Naive thymus-derived CD8-positive, alpha-beta T cell (primary cell): ENCODE measurements at regions of chr4 and their contacts with region 1.

Region 1: DNA sequence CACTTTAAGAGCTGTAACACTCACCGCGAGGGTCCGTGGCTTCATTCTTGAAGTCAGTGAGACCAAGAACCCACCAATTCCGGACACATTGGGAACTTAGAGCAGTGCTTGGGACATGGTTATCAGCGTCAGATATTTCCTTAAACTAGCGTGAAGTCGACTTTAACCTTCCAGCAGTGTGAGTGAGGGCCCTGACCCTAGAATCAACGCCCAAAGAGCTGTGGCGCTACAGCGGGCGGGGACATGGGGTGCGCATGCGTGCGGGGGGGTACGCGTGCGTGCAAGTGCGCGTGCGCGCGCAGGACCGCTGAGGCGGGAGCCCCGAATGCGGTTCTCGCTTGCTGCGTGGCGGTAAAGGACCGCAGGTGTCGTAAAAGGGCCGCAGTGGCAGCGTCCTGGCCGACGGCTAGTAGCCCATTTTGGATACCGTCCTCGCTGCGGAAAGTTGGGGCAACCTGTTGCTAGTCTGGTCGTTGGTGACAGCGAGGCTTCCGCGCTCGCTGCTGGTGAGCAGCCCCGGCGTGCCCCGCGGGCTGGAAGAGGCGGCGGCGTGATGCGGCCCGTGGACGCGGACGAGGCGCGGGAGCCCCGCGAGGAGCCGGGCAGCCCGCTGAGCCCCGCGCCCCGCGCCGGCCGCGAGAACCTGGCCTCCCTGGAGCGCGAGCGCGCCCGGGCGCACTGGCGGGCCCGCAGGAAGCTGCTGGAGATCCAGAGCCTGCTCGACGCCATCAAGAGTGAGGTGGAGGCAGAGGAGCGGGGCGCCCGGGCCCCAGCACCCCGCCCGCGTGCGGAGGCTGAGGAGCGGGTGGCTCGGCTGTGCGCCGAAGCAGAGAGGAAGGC is 19.8 kb upstream of the S100P start:
- DNase-seq: peak; percentile 92 to 97 (median 94)
- ATAC-seq: peak; percentile 83 to 86
- H3K4me3 Mint-ChIP-seq: peak overlapping the region; percentile 78 to 100 (median 96)
- H3K27ac Mint-ChIP-seq: peak overlapping the region; percentile 96 to 99 (median 99)
- H3K4me1 Mint-ChIP-seq: peaks cover 37 to 58% (median 53%) of the 10 kb centered on the region in 4 donors
- H3K27me3 Mint-ChIP-seq: peaks cover 0 to 6% (median 0%) of the 10 kb centered on the region in 5 donors

Region 2: GRCh38 chr4:6327041-6327917 is 346.6 kb before region 1 on chr4:
- POLR2A ChIA-PET with region 1: no interaction called
- DNase-seq: peak; percentile 51 to 86 (median 73)
- ATAC-seq: peak; percentile 74 to 93
- H3K4me3 Mint-ChIP-seq: no peak overlapping the region
- H3K27ac Mint-ChIP-seq: peak overlapping the region in 2 of 10 donors; percentile 57 to 73
- H3K4me1 Mint-ChIP-seq: peaks cover 0 to 6% (median 2%) of the 10 kb centered on the region in 4 donors
- H3K27me3 Mint-ChIP-seq: peaks cover 8 to 60% (median 17%) of the 10 kb centered on the region in 5 donors

Region 3: GRCh38 chr4:6620891-6621555 is 52.9 kb before region 1 on chr4:
- POLR2A ChIA-PET with region 1: no interaction called
- DNase-seq: no peak
- ATAC-seq: no peak
- H3K4me3 Mint-ChIP-seq: no peak overlapping the region
- H3K27ac Mint-ChIP-seq: peak overlapping the region in 6 of 10 donors; percentile 16 to 70 (median 46)
- H3K4me1 Mint-ChIP-seq: peaks cover 0 to 4% (median 1%) of the 10 kb centered on the region in 4 donors
- H3K27me3 Mint-ChIP-seq: no peaks in the 10 kb centered on the region

Region 4: DNA sequence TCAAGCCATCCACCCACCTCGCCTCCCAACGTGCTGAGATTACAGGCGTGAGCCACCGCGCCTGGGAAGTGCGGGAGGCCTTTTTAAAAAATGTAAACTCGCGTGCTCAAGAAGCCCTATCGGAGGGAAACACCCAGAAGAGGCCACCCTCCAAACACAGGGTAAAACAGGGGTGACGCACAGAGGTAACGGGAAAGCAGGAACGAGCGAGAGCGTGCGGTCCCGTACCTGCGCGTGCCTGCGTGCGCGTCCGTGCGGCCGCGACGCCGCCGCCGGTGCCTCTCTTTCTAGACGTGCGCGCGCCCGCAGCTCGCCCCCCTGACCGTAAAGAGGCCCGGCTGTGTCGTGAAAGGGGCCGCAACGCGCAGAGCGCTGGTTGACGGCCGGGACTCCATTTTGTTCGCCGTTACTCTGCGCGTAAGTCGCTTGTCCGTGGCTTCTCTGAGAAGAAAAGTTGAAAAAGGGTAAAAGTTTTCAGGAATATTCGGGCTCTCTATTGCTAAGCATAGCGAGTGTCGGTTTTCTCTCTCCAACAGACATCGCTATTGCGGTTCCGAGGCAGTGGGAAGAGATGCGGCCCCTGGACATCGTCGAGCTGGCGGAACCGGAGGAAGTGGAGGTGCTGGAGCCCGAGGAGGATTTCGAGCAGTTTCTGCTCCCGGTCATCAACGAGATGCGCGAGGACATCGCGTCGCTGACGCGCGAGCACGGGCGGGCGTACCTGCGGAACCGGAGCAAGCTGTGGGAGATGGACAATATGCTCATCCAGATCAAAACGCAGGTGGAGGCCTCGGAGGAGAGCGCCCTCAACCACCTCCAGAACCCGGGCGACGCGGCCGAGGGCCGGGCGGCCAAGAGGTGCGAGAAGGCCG is 33.4 kb before region 1 on chr4 and contains the start of gene MRFAP1:
- POLR2A ChIA-PET with region 1: interaction called, 165 read pairs
- DNase-seq: peak; percentile 91 to 97 (median 94)
- ATAC-seq: peak; percentile 84 to 89
- H3K4me3 Mint-ChIP-seq: peak within 1 kb of the TSS; percentile 97 to 100 (median 99)
- H3K27ac Mint-ChIP-seq: peak within 1 kb of the TSS; percentile 98 to 100 (median 99)
- H3K4me1 Mint-ChIP-seq: peaks cover 25 to 45% (median 41%) of the 10 kb centered on the region in 4 donors
- H3K27me3 Mint-ChIP-seq: no peaks in the 10 kb centered on the region
- polyA plus RNA-seq, gene MRFAP1: 141 to 186 (median 155) TPM

Region 5: GRCh38 chr4:6663596-6664393 is 10.1 kb before region 1 on chr4:
- POLR2A ChIA-PET with region 1: interaction called, 38 read pairs
- DNase-seq: no peak
- ATAC-seq: peak; percentile 36 to 43
- H3K4me3 Mint-ChIP-seq: peak overlapping the region in 8 of 10 donors; percentile 12 to 57 (median 50)
- H3K27ac Mint-ChIP-seq: peak overlapping the region in 1 of 10 donors; percentile 36
- H3K4me1 Mint-ChIP-seq: peaks cover 1 to 13% (median 9%) of the 10 kb centered on the region in 4 donors
- H3K27me3 Mint-ChIP-seq: peaks cover 0 to 35% (median 5%) of the 10 kb centered on the region in 5 donors

Region 6: GRCh38 chr4:6761649-6762602 is 88.0 kb after region 1 on chr4:
- POLR2A ChIA-PET with region 1: no interaction called
- DNase-seq: peak in 3 of 10 donors; percentile 17 to 46 (median 29)
- ATAC-seq: peak; percentile 44 to 92
- H3K4me3 Mint-ChIP-seq: peak overlapping the region; percentile 37 to 77 (median 71)
- H3K27ac Mint-ChIP-seq: peak overlapping the region in 9 of 10 donors; percentile 35 to 91 (median 78)
- H3K4me1 Mint-ChIP-seq: peaks cover 15 to 47% (median 22%) of the 10 kb centered on the region in 4 donors
- H3K27me3 Mint-ChIP-seq: peaks cover 0 to 2% (median 0%) of the 10 kb centered on the region in 5 donors

Region 7: DNA sequence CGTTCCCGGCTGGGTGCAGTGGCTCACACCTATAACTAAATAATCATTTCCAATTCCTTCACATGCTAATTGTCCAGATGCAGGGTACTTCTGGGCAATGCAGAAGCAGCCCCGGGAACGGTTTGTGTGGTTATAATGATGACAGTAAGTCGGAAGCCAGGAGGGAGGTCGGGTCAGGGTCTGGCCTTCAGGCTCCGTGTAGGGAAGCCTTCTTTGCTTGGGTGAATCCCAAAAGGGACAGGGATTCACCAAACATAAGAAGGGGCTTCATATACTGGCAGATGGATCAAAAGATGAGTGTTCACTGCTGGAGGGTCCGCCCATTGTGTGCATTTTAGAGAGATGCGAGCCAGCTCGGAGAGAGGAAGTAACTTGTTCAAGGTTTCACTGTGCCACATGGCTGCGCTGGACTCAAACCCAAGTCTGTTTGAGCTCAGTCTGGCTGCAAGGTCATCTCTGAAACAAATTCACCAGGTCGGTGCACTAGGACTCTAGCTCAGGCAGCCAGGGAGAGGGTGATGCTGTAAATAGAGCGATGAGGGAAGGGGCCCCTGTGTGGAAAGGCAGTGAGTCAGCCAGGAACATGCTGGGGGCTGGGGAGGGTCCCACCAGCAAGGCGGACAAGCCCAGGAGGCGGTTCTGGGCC is 103.9 kb after region 1 on chr4:
- POLR2A ChIA-PET with region 1: interaction called, 31 read pairs
- DNase-seq: peak in 3 of 10 donors; percentile 5 to 28 (median 22)
- ATAC-seq: no peak
- H3K4me3 Mint-ChIP-seq: peak overlapping the region; percentile 58 to 90 (median 76)
- H3K27ac Mint-ChIP-seq: peak overlapping the region; percentile 92 to 99 (median 96)
- H3K4me1 Mint-ChIP-seq: peaks cover 39 to 72% (median 67%) of the 10 kb centered on the region in 4 donors
- H3K27me3 Mint-ChIP-seq: no peaks in the 10 kb centered on the region

Region 8: DNA sequence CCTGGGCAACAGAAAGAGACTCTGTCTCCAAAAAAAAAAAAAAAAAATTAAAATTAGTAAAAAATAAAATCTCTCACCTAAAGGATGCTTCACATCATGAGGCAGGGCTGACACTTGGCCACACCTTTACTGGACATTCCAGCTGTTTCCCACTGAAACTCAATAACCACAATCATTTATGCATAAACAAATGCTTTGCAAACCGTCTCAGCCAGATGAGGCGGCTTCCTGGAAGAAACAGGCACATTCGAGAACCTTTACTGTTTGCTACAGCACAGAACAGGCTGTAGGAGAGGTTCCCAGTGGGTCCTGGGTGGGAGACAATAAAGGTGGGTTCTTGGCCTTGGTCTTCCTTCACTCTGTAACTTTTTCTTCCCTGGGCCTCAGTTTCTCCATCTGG is 224.9 kb after region 1 on chr4:
- POLR2A ChIA-PET with region 1: interaction called, 10 read pairs
- DNase-seq: no peak
- ATAC-seq: peak; percentile 33 to 35
- H3K4me3 Mint-ChIP-seq: peak overlapping the region in 9 of 10 donors; percentile 55 to 75 (median 69)
- H3K27ac Mint-ChIP-seq: peak overlapping the region; percentile 86 to 97 (median 93)
- H3K4me1 Mint-ChIP-seq: peaks cover 14 to 37% (median 26%) of the 10 kb centered on the region in 4 donors
- H3K27me3 Mint-ChIP-seq: no peaks in the 10 kb centered on the region